ENCODE measurements at regions of chrX and their contacts with region 1.

Region 1: GRCh38 chrX:53831662-53832635 is 145.4 kb upstream of the HUWE1 start:
- DNase-seq: peak; percentile 85
- H3K4me3 Mint-ChIP-seq: peak overlapping the region; percentile 64
- H3K27ac Mint-ChIP-seq: peak overlapping the region; percentile 62
- H3K4me1 Mint-ChIP-seq: peaks cover 10% of the 10 kb centered on the region
- H3K27me3 Mint-ChIP-seq: no peaks in the 10 kb centered on the region

Region 2: DNA sequence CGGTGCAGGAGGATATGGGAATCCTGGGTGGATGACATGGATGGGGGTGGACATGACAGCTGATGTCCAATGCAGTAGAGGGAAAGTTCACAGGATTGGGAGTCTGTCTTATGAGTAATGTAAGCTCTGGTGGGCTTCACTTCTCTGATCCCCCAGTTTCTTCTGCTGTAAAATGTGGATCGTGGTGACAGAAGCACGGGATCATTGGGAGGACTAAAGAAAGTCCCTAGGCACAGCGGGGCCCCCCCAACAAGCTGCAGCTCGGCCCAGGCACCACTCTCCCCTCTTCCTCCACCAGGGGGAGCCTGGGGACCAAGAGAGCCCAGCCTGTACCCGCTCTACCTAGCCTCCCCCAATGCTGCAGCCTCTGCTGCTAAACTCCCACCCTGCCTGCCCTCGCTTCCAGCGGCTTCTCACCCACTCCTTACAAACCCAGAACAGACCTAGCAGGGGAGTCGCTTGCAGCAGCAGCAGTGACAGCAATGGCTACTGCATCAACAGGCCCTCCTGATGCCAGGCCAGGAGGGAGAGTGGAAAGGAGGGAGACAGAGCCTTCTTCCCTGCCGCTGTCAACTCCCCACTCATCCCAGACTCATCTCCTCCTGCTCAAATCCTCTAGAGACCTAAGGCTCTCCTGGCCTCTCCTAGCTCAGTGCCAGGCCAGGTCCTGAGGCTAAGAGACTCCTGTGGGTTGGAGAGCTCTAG is 514.4 kb before region 1 on chrX:
- intact Hi-C with region 1: no loop called
- DNase-seq: peak; percentile 89
- H3K4me3 Mint-ChIP-seq: no peak overlapping the region
- H3K27ac Mint-ChIP-seq: no peak overlapping the region
- H3K4me1 Mint-ChIP-seq: peaks cover 13% of the 10 kb centered on the region
- H3K27me3 Mint-ChIP-seq: peaks cover 32% of the 10 kb centered on the region

Region 3: DNA sequence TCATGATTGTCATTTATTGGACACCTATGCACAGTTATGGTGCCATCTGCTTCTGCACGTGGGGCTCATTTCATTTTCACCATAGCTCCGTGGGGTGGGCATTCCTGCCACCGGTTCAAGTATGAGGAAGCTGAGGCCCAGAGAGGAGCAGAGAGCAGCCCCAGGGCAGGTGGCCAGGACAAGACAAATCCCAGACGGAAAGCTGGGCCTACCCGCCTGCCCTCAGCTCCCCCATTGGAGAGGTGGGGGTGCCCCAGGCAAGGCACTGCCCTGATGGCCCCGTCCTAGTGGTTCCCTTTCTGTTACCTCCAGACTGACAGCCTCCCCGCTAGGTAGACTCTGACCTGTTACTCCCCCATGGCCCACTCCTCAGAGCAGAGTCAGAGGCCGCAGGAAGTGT is 71.9 kb before region 1 on chrX:
- intact Hi-C with region 1: loop called (anchors 10 kb)
- DNase-seq: no peak
- H3K4me3 Mint-ChIP-seq: no peak overlapping the region
- H3K27ac Mint-ChIP-seq: no peak overlapping the region
- H3K4me1 Mint-ChIP-seq: no peaks in the 10 kb centered on the region
- H3K27me3 Mint-ChIP-seq: no peaks in the 10 kb centered on the region

Measured in activated CD4-positive, alpha-beta T cell treated with anti-CD3 and anti-CD28 coated beads, Interleukin-2, amount 10 ng/mL, durations not matched to agents 24 days and 14 days (primary cell).